Naive thymus-derived CD4-positive, alpha-beta T cell (primary cell): ENCODE measurements at regions of chr2 and their contacts with region 1.

Region 1: DNA sequence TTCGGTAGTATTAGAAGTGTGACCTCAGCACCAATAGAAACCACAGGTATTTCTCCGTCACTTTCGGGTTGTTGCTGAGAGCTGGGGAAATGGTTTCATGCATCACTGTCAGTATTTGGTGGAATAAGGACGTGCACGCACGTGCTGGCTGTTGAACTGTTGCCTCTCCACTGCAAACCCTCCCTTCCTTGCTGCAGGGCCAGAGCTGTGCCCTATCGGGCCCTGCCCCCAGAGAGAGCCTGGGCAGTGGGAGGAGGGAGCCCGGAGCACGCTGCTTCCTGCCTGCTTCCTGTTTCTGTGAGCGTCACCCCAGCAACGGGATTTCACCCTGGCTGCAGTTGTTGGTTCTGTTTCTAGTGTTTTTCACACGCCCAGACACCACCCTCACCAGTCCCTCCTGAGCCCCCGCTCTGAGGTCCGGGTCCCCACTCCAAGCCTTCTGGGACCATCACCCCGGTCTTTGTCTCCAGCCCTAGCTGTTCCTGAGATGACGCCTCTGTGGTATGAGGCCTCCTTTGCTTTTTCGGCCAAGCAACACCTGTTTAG is 47.4 kb downstream of the LRRFIP1 start:
- DNase-seq: peak; percentile 71 to 92 (median 88)
- ATAC-seq: peak; percentile 77
- H3K4me3 ChIP-seq: peak overlapping the region; percentile 66
- H3K4me3 Mint-ChIP-seq: peak overlapping the region; percentile 84 to 97 (median 90)
- H3K27ac ChIP-seq: peak overlapping the region; percentile 99
- H3K27ac Mint-ChIP-seq: peak overlapping the region; percentile 94 to 100 (median 99)
- H3K4me1 ChIP-seq: peaks cover 30 to 38% of the 10 kb centered on the region in 2 donors
- H3K4me1 Mint-ChIP-seq: peaks cover 37 to 62% (median 57%) of the 10 kb centered on the region in 7 donors
- H3K27me3 ChIP-seq: no peaks in the 10 kb centered on the region
- H3K27me3 Mint-ChIP-seq: peaks cover 0 to 6% (median 0%) of the 10 kb centered on the region in 5 donors

Region 2: DNA sequence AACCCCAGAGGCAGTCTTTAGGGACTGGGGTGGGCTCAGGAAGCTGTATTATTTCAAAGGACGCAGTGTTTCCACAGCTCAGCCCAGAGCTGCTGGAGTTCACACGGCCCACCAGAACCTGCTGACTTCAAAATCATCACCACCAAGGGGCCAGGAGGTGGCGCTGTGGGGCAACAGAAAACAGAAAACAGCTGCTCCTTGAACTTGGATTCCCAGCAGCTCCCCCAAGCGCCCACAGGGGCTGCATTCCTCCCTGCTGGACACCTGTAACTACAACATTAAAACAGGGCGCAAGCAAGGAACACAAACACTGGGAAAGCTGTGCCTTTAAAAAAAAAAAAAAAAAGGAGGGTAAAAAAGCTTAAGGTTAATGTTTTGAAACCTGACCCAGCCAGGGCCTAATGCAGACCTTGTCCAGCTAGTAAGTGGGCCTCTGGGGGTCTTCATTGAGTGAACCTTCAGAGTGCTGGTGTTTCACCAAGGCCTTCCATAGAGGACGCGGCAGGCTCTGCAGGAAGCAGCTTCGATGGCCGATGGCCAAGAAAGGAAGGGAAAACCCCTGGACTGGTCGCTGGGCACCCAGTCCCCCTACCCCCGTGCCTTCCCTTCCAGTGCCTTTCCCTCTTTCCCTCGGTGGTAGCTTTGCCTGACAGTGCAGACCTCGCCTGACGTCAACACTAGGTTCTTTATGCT is 161.9 kb before region 1 on chr2:
- CTCF ChIA-PET with region 1: interaction called, 7 read pairs
- POLR2A ChIA-PET with region 1: no interaction called
- intact Hi-C with region 1: loop called in 1 of 2 experiments (anchors 1 kb)
- DNase-seq: peak; percentile 55 to 76 (median 72)
- ATAC-seq: peak; percentile 85
- H3K4me3 ChIP-seq: no peak overlapping the region
- H3K4me3 Mint-ChIP-seq: no peak overlapping the region
- H3K27ac ChIP-seq: no peak overlapping the region
- H3K27ac Mint-ChIP-seq: no peak overlapping the region
- H3K4me1 ChIP-seq: no peaks in the 10 kb centered on the region
- H3K4me1 Mint-ChIP-seq: no peaks in the 10 kb centered on the region
- H3K27me3 ChIP-seq: no peaks in the 10 kb centered on the region
- H3K27me3 Mint-ChIP-seq: peaks cover 0 to 6% (median 0%) of the 10 kb centered on the region in 5 donors

Region 3: DNA sequence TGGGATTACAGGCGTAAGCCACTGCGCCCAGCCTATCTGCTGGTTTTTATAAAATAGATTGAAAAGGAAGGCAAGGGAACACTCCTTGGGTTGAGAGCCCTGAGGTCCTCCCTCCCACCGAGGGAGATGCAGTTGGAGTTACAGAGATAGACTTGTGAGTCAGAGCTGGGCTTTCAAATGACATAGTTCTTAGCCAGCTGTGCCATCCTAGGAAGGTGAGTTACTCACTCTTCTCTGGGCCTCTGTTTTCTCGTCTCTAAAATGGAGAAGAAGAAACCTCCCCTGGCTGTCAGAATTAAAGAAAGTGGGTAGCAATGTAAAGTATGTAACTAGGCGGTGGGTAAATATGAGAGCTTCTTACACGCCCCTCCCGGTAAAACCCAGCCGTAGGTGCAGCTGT is 45.1 kb before region 1 on chr2:
- CTCF ChIA-PET with region 1: no interaction called
- POLR2A ChIA-PET with region 1: no interaction called
- intact Hi-C with region 1: no loop called
- DNase-seq: no peak
- ATAC-seq: no peak
- H3K4me3 ChIP-seq: no peak overlapping the region
- H3K4me3 Mint-ChIP-seq: peak overlapping the region in 1 of 10 donors; percentile 39
- H3K27ac ChIP-seq: no peak overlapping the region
- H3K27ac Mint-ChIP-seq: peak overlapping the region in 1 of 9 donors; percentile 51
- H3K4me1 ChIP-seq: peaks cover 0 to 7% of the 10 kb centered on the region in 2 donors
- H3K4me1 Mint-ChIP-seq: peaks cover 4 to 44% (median 28%) of the 10 kb centered on the region in 7 donors
- H3K27me3 ChIP-seq: no peaks in the 10 kb centered on the region
- H3K27me3 Mint-ChIP-seq: peaks cover 0 to 59% (median 6%) of the 10 kb centered on the region in 5 donors

Region 4: GRCh38 chr2:237685408-237685807 is 10.6 kb after region 1 on chr2:
- CTCF ChIA-PET with region 1: interaction called, 111 read pairs
- POLR2A ChIA-PET with region 1: interaction called, 349 read pairs
- intact Hi-C with region 1: loop called (anchors 1 kb)
- DNase-seq: no peak
- ATAC-seq: no peak
- H3K4me3 ChIP-seq: no peak overlapping the region
- H3K4me3 Mint-ChIP-seq: no peak overlapping the region
- H3K27ac ChIP-seq: no peak overlapping the region
- H3K27ac Mint-ChIP-seq: peak overlapping the region in 8 of 9 donors; percentile 55 to 100 (median 98)
- H3K4me1 ChIP-seq: peaks cover 29 to 39% of the 10 kb centered on the region in 2 donors
- H3K4me1 Mint-ChIP-seq: peaks cover 28 to 62% (median 49%) of the 10 kb centered on the region in 7 donors
- H3K27me3 ChIP-seq: no peaks in the 10 kb centered on the region
- H3K27me3 Mint-ChIP-seq: no peaks in the 10 kb centered on the region

Region 5: DNA sequence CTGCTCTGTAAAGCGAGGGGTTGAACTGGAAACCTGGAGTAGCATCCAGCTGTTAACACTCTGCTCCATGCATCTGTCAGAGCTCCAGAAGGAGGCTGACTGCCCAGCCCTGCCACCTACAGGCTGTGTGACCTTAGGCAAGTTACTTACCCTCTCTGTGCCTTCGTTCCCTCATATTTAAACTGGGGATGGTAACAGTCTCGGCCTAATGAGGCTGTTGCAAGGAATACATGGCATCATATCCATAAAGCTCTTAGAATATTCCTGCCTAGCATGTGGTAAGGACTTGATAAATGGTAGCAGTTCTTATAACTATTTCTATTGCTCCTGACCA is 33.2 kb after region 1 on chr2:
- CTCF ChIA-PET with region 1: interaction called, 22 read pairs
- POLR2A ChIA-PET with region 1: interaction called, 15 read pairs
- intact Hi-C with region 1: loop called in 1 of 2 experiments (anchors 1 kb)
- DNase-seq: no peak
- ATAC-seq: peak; percentile 13
- H3K4me3 ChIP-seq: no peak overlapping the region
- H3K4me3 Mint-ChIP-seq: peak overlapping the region in 5 of 10 donors; percentile 4 to 60 (median 49)
- H3K27ac ChIP-seq: peak overlapping the region; percentile 46
- H3K27ac Mint-ChIP-seq: peak overlapping the region in 7 of 9 donors; percentile 70 to 94 (median 89)
- H3K4me1 ChIP-seq: peaks cover 26 to 34% of the 10 kb centered on the region in 2 donors
- H3K4me1 Mint-ChIP-seq: peaks cover 44 to 81% (median 68%) of the 10 kb centered on the region in 7 donors
- H3K27me3 ChIP-seq: no peaks in the 10 kb centered on the region
- H3K27me3 Mint-ChIP-seq: no peaks in the 10 kb centered on the region

Region 6: GRCh38 chr2:238060542-238061314 is 385.9 kb after region 1 on chr2 and contains the start of gene SCLY:
- CTCF ChIA-PET with region 1: no interaction called
- POLR2A ChIA-PET with region 1: no interaction called
- intact Hi-C with region 1: loop called in 1 of 2 experiments (anchors 2 kb)
- DNase-seq: peak; percentile 86 to 95 (median 93)
- ATAC-seq: peak; percentile 99
- H3K4me3 ChIP-seq: peak within 1 kb of the TSS; percentile 96
- H3K4me3 Mint-ChIP-seq: peak within 1 kb of the TSS; percentile 85 to 98 (median 88)
- H3K27ac ChIP-seq: peak within 1 kb of the TSS; percentile 85
- H3K27ac Mint-ChIP-seq: peak within 1 kb of the TSS; percentile 80 to 93 (median 90)
- H3K4me1 ChIP-seq: peaks cover 5 to 12% of the 10 kb centered on the region in 2 donors
- H3K4me1 Mint-ChIP-seq: peaks cover 24 to 57% (median 37%) of the 10 kb centered on the region in 7 donors
- H3K27me3 ChIP-seq: peaks cover 0 to 3% of the 10 kb centered on the region in 2 donors
- H3K27me3 Mint-ChIP-seq: peaks cover 3 to 16% (median 13%) of the 10 kb centered on the region in 5 donors
- total RNA-seq, gene SCLY: 16.1 to 47.3 (median 29.1) TPM

Region 7: GRCh38 chr2:238985871-238986446 is 1311.2 kb after region 1 on chr2:
- CTCF ChIA-PET with region 1: no interaction called
- POLR2A ChIA-PET with region 1: no interaction called
- intact Hi-C with region 1: no loop called
- DNase-seq: no peak
- ATAC-seq: no peak
- H3K4me3 ChIP-seq: no peak overlapping the region
- H3K4me3 Mint-ChIP-seq: no peak overlapping the region
- H3K27ac ChIP-seq: no peak overlapping the region
- H3K27ac Mint-ChIP-seq: no peak overlapping the region
- H3K4me1 ChIP-seq: no peaks in the 10 kb centered on the region
- H3K4me1 Mint-ChIP-seq: no peaks in the 10 kb centered on the region
- H3K27me3 ChIP-seq: no peaks in the 10 kb centered on the region
- H3K27me3 Mint-ChIP-seq: peaks cover 0 to 11% (median 3%) of the 10 kb centered on the region in 5 donors